Panc1 (cell line): ENCODE measurements at regions of chr4 and their contacts with region 1.

Region 1: GRCh38 chr4:3365871-3366842 is 73.3 kb downstream of the RGS12 start:
- DNase-seq: no peak
- ATAC-seq: peak; percentile 32; the same call in 1 of the 2 replicates
- H3K4me3 ChIP-seq: no peak overlapping the region
- H3K27ac ChIP-seq: no peak overlapping the region
- H3K4me1 ChIP-seq: no peaks in the 10 kb centered on the region
- H3K27me3 ChIP-seq: no peaks in the 10 kb centered on the region
- CTCF ChIP-seq: no peak

Region 2: GRCh38 chr4:3021627-3022026 is 344.5 kb before region 1 on chr4:
- CTCF ChIA-PET with region 1: no interaction called
- POLR2A ChIA-PET with region 1: no interaction called
- in situ Hi-C with region 1: no loop called
- intact Hi-C with region 1: no loop called
- DNase-seq: no peak
- ATAC-seq: no peak
- H3K4me3 ChIP-seq: no peak overlapping the region
- H3K27ac ChIP-seq: no peak overlapping the region
- H3K4me1 ChIP-seq: no peaks in the 10 kb centered on the region
- H3K27me3 ChIP-seq: no peaks in the 10 kb centered on the region
- CTCF ChIP-seq: no peak

Region 3: DNA sequence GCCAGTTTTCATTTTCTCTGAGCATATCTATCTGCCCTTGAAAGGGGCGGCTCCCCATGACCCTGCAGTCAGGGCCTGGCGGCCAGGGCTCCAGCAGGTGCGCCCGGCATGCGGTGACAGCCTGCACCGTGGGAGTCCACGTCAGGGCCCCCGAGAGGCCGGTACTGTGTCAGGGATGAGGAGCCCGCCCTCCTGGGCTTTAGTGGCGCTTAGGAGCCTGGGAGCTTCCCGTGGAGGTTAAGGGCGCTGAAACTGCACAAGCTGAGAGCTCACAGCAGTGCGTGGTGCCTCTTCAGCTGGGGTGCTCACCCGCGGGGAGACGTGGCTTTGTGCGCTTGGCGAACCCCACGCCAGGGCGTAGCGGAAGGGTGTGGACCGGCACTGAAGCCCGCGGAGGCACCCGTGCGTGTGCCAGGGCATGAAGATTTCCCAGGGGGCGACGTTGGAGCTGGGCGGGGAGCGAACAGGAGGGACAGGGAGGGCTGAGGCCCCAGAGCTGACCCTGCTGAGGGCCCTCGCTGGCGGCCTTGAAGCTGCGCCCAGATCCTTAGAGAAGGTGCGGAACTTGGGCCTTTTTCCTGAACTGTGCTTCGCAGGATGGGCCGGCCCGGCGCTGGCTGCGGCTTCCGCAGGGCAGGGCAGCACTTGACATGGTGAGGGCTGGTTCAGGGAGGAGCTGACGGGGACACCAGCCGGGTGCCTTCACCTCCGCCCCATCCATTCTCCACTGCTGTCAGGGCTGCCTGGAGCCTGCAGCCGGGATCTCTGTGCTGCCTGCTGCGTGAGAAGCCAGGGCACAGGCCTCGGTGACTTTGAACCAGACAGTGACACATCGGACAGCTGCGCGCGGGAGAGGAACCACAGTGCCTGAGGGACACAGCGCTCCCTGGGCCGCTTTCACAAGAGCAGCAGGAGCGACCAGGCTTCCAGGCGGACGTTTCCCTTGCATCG is 324.7 kb before region 1 on chr4:
- CTCF ChIA-PET with region 1: no interaction called
- POLR2A ChIA-PET with region 1: no interaction called
- in situ Hi-C with region 1: no loop called
- intact Hi-C with region 1: no loop called
- DNase-seq: no peak
- ATAC-seq: no peak; the same call in 1 of the 2 replicates
- H3K4me3 ChIP-seq: no peak overlapping the region
- H3K27ac ChIP-seq: no peak overlapping the region
- H3K4me1 ChIP-seq: no peaks in the 10 kb centered on the region
- H3K27me3 ChIP-seq: no peaks in the 10 kb centered on the region
- CTCF ChIP-seq: no peak

Region 4: GRCh38 chr4:3418029-3418762 is 52.0 kb after region 1 on chr4:
- CTCF ChIA-PET with region 1: interaction called, 10 read pairs
- POLR2A ChIA-PET with region 1: no interaction called
- in situ Hi-C with region 1: no loop called
- intact Hi-C with region 1: no loop called
- DNase-seq: no peak
- ATAC-seq: no peak
- H3K4me3 ChIP-seq: no peak overlapping the region
- H3K27ac ChIP-seq: no peak overlapping the region
- H3K4me1 ChIP-seq: no peaks in the 10 kb centered on the region
- H3K27me3 ChIP-seq: no peaks in the 10 kb centered on the region
- CTCF ChIP-seq: no peak; the same call in 1 of the 2 replicates